Activated CD8-positive, alpha-beta T cell treated with anti-CD3 and anti-CD28 coated beads, Interleukin-2, amount 10 ng/mL, durations not matched to agents 7 days and 5 days (primary cell): ENCODE measurements at regions of chr20 and their contacts with region 1.

Region 1: DNA sequence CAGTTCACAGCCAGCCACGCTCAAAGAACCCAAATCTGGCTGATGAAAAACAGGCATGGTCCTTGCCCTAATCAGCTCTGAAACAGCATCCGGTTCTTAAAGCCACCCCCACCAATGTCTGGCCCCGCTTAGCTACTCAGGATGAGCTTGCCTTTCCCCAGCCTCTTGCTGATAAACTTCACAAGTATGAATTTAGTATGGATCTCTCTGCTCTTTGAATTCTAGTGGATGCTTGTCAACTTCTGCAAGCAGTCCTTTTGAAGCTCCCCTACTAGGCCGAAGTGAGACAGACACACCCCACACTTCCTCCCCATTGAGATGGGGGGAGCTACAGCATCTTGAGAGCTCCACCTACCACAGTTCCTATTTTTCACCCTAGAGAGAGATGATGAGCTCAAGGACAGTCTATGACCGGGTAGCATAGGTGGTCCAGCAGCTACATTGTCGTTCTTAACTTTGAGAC is 36.7 kb downstream of the EBF4 start:
- DNase-seq: peak; percentile 51
- ATAC-seq: peak; percentile 90
- H3K4me3 Mint-ChIP-seq: peak overlapping the region; percentile 6
- H3K27ac Mint-ChIP-seq: peak overlapping the region; percentile 77
- H3K4me1 Mint-ChIP-seq: peaks cover 11% of the 10 kb centered on the region
- H3K27me3 Mint-ChIP-seq: peaks cover 17% of the 10 kb centered on the region

Region 2: GRCh38 chr20:2713285-2713684 is 16.0 kb before region 1 on chr20:
- CTCF ChIA-PET with region 1: interaction called, 19 read pairs
- POLR2A ChIA-PET with region 1: no interaction called
- DNase-seq: no peak
- ATAC-seq: peak; percentile 60
- H3K4me3 Mint-ChIP-seq: no peak overlapping the region
- H3K27ac Mint-ChIP-seq: no peak overlapping the region
- H3K4me1 Mint-ChIP-seq: no peaks in the 10 kb centered on the region
- H3K27me3 Mint-ChIP-seq: peaks cover 6% of the 10 kb centered on the region

Region 3: GRCh38 chr20:2752567-2753460 is 23.5 kb after region 1 on chr20:
- CTCF ChIA-PET with region 1: interaction called, 15 read pairs
- POLR2A ChIA-PET with region 1: no interaction called
- DNase-seq: peak; percentile 47
- ATAC-seq: peak; percentile 21
- H3K4me3 Mint-ChIP-seq: peak overlapping the region; percentile 70
- H3K27ac Mint-ChIP-seq: no peak overlapping the region
- H3K4me1 Mint-ChIP-seq: peaks cover 21% of the 10 kb centered on the region
- H3K27me3 Mint-ChIP-seq: peaks cover 56% of the 10 kb centered on the region

Region 4: GRCh38 chr20:2809690-2810089 is 80.4 kb after region 1 on chr20:
- CTCF ChIA-PET with region 1: no interaction called
- POLR2A ChIA-PET with region 1: no interaction called
- DNase-seq: no peak
- ATAC-seq: no peak
- H3K4me3 Mint-ChIP-seq: no peak overlapping the region
- H3K27ac Mint-ChIP-seq: no peak overlapping the region
- H3K4me1 Mint-ChIP-seq: no peaks in the 10 kb centered on the region
- H3K27me3 Mint-ChIP-seq: peaks cover 60% of the 10 kb centered on the region